ENCODE measurements at regions of chr3 and their contacts with region 1.

Region 1: GRCh38 chr3:186217820-186218164 is 108.9 kb upstream of the ETV5 start:
- DNase-seq: no peak
- ATAC-seq: no peak
- H3K4me3 Mint-ChIP-seq: no peak overlapping the region
- H3K27ac Mint-ChIP-seq: no peak overlapping the region
- H3K4me1 Mint-ChIP-seq: no peaks in the 10 kb centered on the region
- H3K27me3 Mint-ChIP-seq: no peaks in the 10 kb centered on the region
- CTCF ChIP-seq: no peak

Region 2: DNA sequence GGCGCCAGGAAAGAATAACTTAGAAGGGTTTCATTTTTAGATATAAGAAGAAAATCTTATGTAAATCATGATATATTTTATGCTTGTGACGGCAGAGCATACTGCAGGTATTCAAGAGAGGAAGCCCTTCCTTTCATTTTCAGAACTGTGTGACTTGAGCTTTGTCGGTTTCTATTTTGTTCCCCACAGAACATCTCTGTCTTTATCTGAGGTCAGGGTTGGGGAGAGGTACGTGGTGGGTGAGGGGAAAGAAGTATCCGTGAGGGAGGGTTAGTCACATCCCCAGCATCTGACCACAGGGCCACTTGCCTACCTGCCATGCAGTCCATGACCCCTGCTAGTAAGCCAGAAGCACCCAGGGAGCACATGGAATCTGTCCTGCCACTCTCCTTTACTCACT is 17.8 kb after region 1 on chr3:
- CTCF ChIA-PET with region 1: no interaction called
- POLR2A ChIA-PET with region 1: no interaction called
- intact Hi-C with region 1: loop called (anchors 2 kb)
- DNase-seq: no peak
- ATAC-seq: peak; percentile 42
- H3K4me3 Mint-ChIP-seq: peak overlapping the region; percentile 29
- H3K27ac Mint-ChIP-seq: no peak overlapping the region
- H3K4me1 Mint-ChIP-seq: peaks cover 13% of the 10 kb centered on the region
- H3K27me3 Mint-ChIP-seq: no peaks in the 10 kb centered on the region
- CTCF ChIP-seq: no peak

Region 3: GRCh38 chr3:186259612-186260383 is 42.0 kb after region 1 on chr3:
- CTCF ChIA-PET with region 1: no interaction called
- POLR2A ChIA-PET with region 1: no interaction called
- intact Hi-C with region 1: no loop called
- DNase-seq: peak; percentile 66
- ATAC-seq: peak; percentile 62
- H3K4me3 Mint-ChIP-seq: no peak overlapping the region
- H3K27ac Mint-ChIP-seq: peak overlapping the region; percentile 76
- H3K4me1 Mint-ChIP-seq: peaks cover 40% of the 10 kb centered on the region
- H3K27me3 Mint-ChIP-seq: no peaks in the 10 kb centered on the region
- CTCF ChIP-seq: peak; percentile 13

Measured in activated B cell treated with CpG ODN at 0.5 μM for 24 hours (primary cell).